ENCODE measurements at regions of chr10 and their contacts with region 1.

Region 1: GRCh38 chr10:24201503-24202180 is 7.3 kb upstream of the KIAA1217 start:
- DNase-seq: no peak
- ATAC-seq: no peak
- H3K4me3 ChIP-seq: no peak overlapping the region
- H3K27ac ChIP-seq: no peak overlapping the region
- H3K4me1 ChIP-seq: peaks cover 3% of the 10 kb centered on the region
- H3K27me3 ChIP-seq: no peaks in the 10 kb centered on the region
- CTCF ChIP-seq: no peak
- EP300 ChIP-seq: no peak
- POLR2A ChIP-seq: no peak
- RAD21 ChIP-seq: no peak

Region 2: DNA sequence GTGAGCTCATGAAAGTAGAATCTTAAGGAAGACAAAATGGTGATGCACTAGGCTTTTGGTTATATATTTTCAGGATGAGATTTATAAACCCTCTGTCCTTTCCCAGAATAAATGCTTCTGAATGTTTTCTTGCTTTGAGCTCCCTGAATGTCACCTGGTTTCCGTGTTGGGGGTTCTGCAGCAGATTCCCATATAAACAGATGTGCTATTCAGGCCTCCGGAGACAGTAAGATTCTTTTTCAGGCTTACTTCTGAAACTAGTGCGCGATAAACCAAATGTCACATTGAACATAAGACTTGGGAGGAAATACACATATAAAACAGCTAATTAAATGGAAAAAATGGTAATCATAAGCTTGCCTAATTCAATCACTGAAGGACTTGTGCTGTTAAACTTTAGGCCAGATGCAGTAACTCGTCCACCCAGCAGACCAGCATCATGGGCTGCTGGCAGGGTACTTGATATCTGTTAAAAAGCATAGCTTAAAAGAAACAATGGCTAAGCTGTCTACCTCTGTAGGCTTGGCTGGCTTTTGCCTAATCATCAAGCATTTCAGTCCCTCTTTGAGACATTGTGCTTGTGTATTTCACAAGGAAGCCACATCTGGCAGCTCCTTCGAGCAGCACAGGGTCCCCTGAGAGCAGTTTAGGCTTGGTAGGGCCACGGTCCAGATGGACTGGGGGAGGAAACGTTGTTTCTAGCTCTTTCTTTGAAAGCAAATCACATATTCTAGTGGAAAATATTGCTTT is 273.9 kb before region 1 on chr10:
- CTCF ChIA-PET with region 1: no interaction called
- POLR2A ChIA-PET with region 1: no interaction called
- RAD21 ChIA-PET with region 1: no interaction called
- SMC1A ChIA-PET with region 1: no interaction called
- in situ Hi-C with region 1: no loop called
- intact Hi-C with region 1: no loop called
- DNase-seq: no peak
- ATAC-seq: no peak
- H3K4me3 ChIP-seq: no peak overlapping the region
- H3K27ac ChIP-seq: no peak overlapping the region
- H3K4me1 ChIP-seq: no peaks in the 10 kb centered on the region
- H3K27me3 ChIP-seq: no peaks in the 10 kb centered on the region
- CTCF ChIP-seq: no peak
- EP300 ChIP-seq: no peak
- POLR2A ChIP-seq: no peak
- RAD21 ChIP-seq: no peak

Region 3: GRCh38 chr10:23945845-23946244 is 255.8 kb before region 1 on chr10:
- CTCF ChIA-PET with region 1: no interaction called
- POLR2A ChIA-PET with region 1: no interaction called
- RAD21 ChIA-PET with region 1: no interaction called
- SMC1A ChIA-PET with region 1: no interaction called
- in situ Hi-C with region 1: no loop called
- intact Hi-C with region 1: no loop called
- DNase-seq: no peak
- ATAC-seq: no peak
- H3K4me3 ChIP-seq: no peak overlapping the region
- H3K27ac ChIP-seq: no peak overlapping the region
- H3K4me1 ChIP-seq: no peaks in the 10 kb centered on the region
- H3K27me3 ChIP-seq: no peaks in the 10 kb centered on the region
- CTCF ChIP-seq: no peak
- EP300 ChIP-seq: no peak
- POLR2A ChIP-seq: no peak
- RAD21 ChIP-seq: no peak

Region 4: GRCh38 chr10:24255881-24256311 is 54.3 kb after region 1 on chr10:
- CTCF ChIA-PET with region 1: no interaction called
- POLR2A ChIA-PET with region 1: no interaction called
- RAD21 ChIA-PET with region 1: no interaction called
- SMC1A ChIA-PET with region 1: no interaction called
- in situ Hi-C with region 1: no loop called
- intact Hi-C with region 1: loop called (anchors 1 kb)
- DNase-seq: no peak
- ATAC-seq: no peak
- H3K4me3 ChIP-seq: no peak overlapping the region
- H3K27ac ChIP-seq: no peak overlapping the region
- H3K4me1 ChIP-seq: no peaks in the 10 kb centered on the region
- H3K27me3 ChIP-seq: no peaks in the 10 kb centered on the region
- CTCF ChIP-seq: no peak
- EP300 ChIP-seq: no peak
- POLR2A ChIP-seq: no peak
- RAD21 ChIP-seq: no peak

Region 5: GRCh38 chr10:24503461-24504320 is 302.0 kb after region 1 on chr10:
- CTCF ChIA-PET with region 1: interaction called, 4 read pairs
- POLR2A ChIA-PET with region 1: no interaction called
- RAD21 ChIA-PET with region 1: interaction called, 3 read pairs
- SMC1A ChIA-PET with region 1: interaction called, 8 read pairs
- in situ Hi-C with region 1: no loop called
- intact Hi-C with region 1: loop called (anchors 5 kb)
- DNase-seq: peak; percentile 36
- ATAC-seq: peak; percentile 93
- H3K4me3 ChIP-seq: no peak overlapping the region
- H3K27ac ChIP-seq: no peak overlapping the region
- H3K4me1 ChIP-seq: no peaks in the 10 kb centered on the region
- H3K27me3 ChIP-seq: no peaks in the 10 kb centered on the region; a peak in 1 of 4 replicates
- CTCF ChIP-seq: peak; percentile 50 to 73 (median 60); a peak in 5 of 6 replicates
- EP300 ChIP-seq: no peak
- POLR2A ChIP-seq: no peak
- RAD21 ChIP-seq: peak; percentile 92